ENCODE measurements at regions of chr7 and their contacts with region 1.

Region 1: GRCh38 chr7:104848138-104848990 is 165.6 kb upstream of the KMT2E start:
- DNase-seq: no peak
- H3K4me3 ChIP-seq: no peak overlapping the region
- H3K27ac ChIP-seq: no peak overlapping the region
- H3K27me3 ChIP-seq: peaks cover 7% of the 10 kb centered on the region
- CTCF ChIP-seq: peak; percentile 89

Region 2: DNA sequence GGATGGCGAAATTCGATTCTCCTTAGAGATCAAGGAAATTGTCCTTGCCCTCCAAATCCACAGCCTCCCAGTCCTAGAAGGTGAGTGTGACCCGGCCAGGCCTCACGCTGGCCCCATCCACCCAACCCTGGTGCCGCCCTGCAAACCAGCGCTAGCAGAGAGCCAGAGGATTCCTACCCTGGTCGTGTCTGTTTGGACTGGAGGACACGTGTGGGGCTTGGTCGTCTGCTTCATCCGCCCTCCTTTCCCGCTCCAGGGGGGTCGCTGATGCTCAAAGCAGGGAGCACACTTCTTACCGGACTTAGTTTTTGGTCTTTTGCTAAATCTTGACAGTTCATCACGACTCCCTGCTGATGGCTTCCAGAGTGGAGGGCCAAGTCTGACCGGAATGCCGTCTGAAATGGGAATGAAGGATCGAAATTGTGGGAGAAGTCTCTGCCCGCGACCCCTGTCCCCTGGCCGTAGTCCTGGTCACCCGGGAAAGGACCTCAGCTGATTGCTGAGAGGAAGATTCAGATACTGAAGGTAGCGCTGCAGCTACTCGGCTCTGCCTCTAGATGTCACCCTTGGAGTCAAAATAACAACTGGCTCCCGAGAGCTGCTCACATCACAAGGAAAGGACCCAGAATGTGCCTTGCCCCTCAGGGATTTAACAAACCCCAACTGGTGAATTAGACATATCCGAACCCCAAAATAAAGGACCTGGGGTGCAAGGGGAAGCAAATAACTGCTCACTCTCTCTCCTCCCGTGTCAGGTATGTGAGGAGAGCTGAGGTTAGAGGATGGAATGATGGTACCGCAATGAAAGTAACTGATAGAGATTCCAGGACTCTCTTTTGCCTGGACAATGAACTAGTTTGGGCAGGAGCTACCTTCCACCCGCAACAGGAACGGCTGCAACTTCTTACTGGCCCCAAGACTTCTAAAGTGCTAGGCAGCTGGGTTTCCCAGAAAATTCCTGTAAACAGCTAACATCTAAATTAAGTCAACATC is 617.0 kb before region 1 on chr7:
- CTCF ChIA-PET with region 1: interaction called, 63 read pairs
- POLR2A ChIA-PET with region 1: no interaction called
- DNase-seq: peak; percentile 30
- H3K4me3 ChIP-seq: peak overlapping the region; percentile 38
- H3K27ac ChIP-seq: no peak overlapping the region
- H3K27me3 ChIP-seq: peaks cover 6% of the 10 kb centered on the region
- CTCF ChIP-seq: peak; percentile 93

Region 3: GRCh38 chr7:104643587-104644217 is 204.7 kb before region 1 on chr7:
- CTCF ChIA-PET with region 1: interaction called, 23 read pairs
- POLR2A ChIA-PET with region 1: no interaction called
- DNase-seq: no peak
- H3K4me3 ChIP-seq: no peak overlapping the region
- H3K27ac ChIP-seq: no peak overlapping the region
- H3K27me3 ChIP-seq: no peaks in the 10 kb centered on the region
- CTCF ChIP-seq: peak; percentile 60

Region 4: DNA sequence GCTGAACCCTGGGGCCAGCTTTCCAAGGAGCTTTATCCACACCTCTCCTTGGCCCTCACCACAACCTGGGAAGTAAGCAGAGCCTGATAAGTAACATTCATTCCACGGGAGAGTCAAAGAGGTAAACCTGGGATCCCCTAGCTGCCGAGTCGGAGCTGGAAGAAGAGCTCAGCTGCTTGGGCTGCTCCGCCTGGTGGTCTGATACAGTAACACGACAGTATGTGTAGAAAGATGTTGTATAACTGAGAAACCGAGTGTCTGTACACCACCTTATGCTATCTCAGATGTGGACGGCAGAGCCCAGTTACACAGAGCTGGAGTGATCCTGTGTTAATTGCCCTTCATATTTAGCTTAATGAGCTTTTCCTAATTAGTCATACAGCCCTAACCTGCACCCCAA is 14.4 kb after region 1 on chr7:
- CTCF ChIA-PET with region 1: interaction called, 19 read pairs
- POLR2A ChIA-PET with region 1: no interaction called
- DNase-seq: no peak
- H3K4me3 ChIP-seq: no peak overlapping the region
- H3K27ac ChIP-seq: no peak overlapping the region
- H3K27me3 ChIP-seq: peaks cover 5% of the 10 kb centered on the region
- CTCF ChIP-seq: 0 out of 2 replicates have a peak, but pooled peaks have one; percentile 20

Measured in AG04450 (cell line).